A673 (cell line): ENCODE measurements at regions of chr11 and their contacts with region 1.

Region 1: DNA sequence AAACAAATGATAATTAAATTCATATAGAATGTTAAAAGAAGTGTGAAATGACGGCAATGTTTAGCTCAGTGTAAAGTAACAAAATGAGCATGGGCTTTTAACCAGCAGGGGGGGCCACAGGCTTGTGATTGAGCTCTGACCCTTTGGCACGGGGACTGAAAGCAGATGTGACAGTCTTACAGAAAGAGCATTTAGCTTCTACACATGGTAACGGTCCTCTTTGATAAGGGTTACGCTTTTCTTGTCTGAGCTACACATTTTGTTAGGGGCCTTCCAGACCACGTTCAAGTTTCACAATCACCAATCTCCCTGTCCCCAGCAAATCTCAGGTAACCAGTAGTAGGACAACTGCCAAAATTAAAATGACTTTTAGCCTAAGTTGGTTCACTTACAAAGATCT is 262.5 kb downstream of the DCDC1 start:
- DNase-seq: peak; percentile 95
- H3K4me3 ChIP-seq: no peak overlapping the region
- H3K27ac ChIP-seq: no peak overlapping the region
- H3K4me1 ChIP-seq: peaks cover 29% of the 10 kb centered on the region
- H3K27me3 ChIP-seq: no peaks in the 10 kb centered on the region
- CTCF ChIP-seq: peak; percentile 100

Region 2: DNA sequence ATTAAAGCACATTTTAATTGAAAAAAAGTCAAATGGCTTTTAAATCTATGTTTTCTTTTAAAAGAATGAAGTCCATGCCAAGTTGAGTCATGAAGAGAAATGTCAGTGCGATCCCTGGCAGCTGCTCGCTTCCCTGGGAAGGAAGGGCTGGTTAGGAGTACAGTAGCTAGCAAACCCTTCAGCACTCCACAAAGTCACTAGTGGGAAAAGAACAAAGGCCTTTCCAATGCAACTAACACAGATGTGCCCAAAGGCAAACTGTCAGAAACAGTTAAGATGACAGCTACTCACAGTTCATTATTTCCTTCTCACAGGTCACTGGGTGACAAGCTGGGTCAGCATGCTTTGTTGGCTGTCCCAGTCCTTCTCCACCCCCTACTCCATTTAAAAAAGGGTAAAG is 46.2 kb before region 1 on chr11:
- CTCF ChIA-PET with region 1: no interaction called
- POLR2A ChIA-PET with region 1: no interaction called
- intact Hi-C with region 1: no loop called
- DNase-seq: no peak
- H3K4me3 ChIP-seq: no peak overlapping the region
- H3K27ac ChIP-seq: no peak overlapping the region
- H3K4me1 ChIP-seq: no peaks in the 10 kb centered on the region
- H3K27me3 ChIP-seq: peaks cover 23% of the 10 kb centered on the region
- CTCF ChIP-seq: no peak

Region 3: GRCh38 chr11:31233424-31233823 is 126.4 kb after region 1 on chr11:
- CTCF ChIA-PET with region 1: interaction called, 50 read pairs
- POLR2A ChIA-PET with region 1: interaction called, 3 read pairs
- intact Hi-C with region 1: loop called (anchors 1 kb)
- DNase-seq: peak; percentile 68
- H3K4me3 ChIP-seq: no peak overlapping the region
- H3K27ac ChIP-seq: no peak overlapping the region
- H3K4me1 ChIP-seq: peaks cover 16% of the 10 kb centered on the region
- H3K27me3 ChIP-seq: no peaks in the 10 kb centered on the region
- CTCF ChIP-seq: peak; percentile 81

Region 4: GRCh38 chr11:31340903-31341572 is 234.0 kb after region 1 on chr11:
- CTCF ChIA-PET with region 1: interaction called, 9 read pairs
- POLR2A ChIA-PET with region 1: no interaction called
- intact Hi-C with region 1: loop called (anchors 10 kb)
- DNase-seq: peak; percentile 80
- H3K4me3 ChIP-seq: no peak overlapping the region
- H3K27ac ChIP-seq: no peak overlapping the region
- H3K4me1 ChIP-seq: no peaks in the 10 kb centered on the region
- H3K27me3 ChIP-seq: peaks cover 71% of the 10 kb centered on the region
- CTCF ChIP-seq: peak; percentile 99

Region 5: GRCh38 chr11:31408201-31408600 is 301.1 kb after region 1 on chr11:
- CTCF ChIA-PET with region 1: no interaction called
- POLR2A ChIA-PET with region 1: no interaction called
- intact Hi-C with region 1: no loop called
- DNase-seq: no peak
- H3K4me3 ChIP-seq: no peak overlapping the region
- H3K27ac ChIP-seq: no peak overlapping the region
- H3K4me1 ChIP-seq: peaks cover 5% of the 10 kb centered on the region
- H3K27me3 ChIP-seq: no peaks in the 10 kb centered on the region
- CTCF ChIP-seq: no peak

Region 6: DNA sequence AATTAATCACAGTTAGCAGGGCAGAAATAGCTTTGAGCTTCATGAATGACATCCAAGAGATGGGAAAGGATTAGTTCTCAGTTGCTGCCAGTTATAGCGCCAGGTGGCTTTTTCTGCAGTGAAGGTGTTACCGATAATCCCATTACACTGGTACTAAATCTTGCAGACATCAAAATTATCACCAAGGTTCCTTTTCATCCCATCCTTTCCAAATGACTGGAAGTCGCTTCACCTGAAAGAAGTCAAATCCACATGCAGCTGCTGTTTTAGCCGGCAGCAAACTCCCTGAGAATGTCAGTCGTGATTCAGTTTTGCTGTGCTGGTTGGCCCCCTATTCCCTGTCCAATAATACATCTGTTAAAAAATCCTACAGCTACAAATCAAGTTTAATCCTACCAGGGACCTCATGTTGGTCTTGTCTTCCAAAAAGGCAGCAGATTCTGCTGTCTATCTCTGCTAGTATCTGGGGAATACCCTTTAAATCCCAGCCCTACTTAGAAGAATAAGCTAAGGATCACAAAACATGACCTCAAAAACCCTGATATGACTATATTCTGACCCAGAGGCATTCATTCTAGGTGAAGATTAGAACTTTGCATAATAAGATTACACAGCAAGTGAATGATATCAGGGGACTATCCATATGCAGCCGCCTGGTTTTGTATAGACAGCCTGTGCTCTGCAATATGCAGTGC is 370.6 kb after region 1 on chr11:
- CTCF ChIA-PET with region 1: no interaction called
- POLR2A ChIA-PET with region 1: no interaction called
- intact Hi-C with region 1: loop called (anchors 10 kb)
- DNase-seq: peak; percentile 42
- H3K4me3 ChIP-seq: no peak overlapping the region
- H3K27ac ChIP-seq: no peak overlapping the region
- H3K4me1 ChIP-seq: peaks cover 21% of the 10 kb centered on the region
- H3K27me3 ChIP-seq: no peaks in the 10 kb centered on the region
- CTCF ChIP-seq: no peak

Region 7: DNA sequence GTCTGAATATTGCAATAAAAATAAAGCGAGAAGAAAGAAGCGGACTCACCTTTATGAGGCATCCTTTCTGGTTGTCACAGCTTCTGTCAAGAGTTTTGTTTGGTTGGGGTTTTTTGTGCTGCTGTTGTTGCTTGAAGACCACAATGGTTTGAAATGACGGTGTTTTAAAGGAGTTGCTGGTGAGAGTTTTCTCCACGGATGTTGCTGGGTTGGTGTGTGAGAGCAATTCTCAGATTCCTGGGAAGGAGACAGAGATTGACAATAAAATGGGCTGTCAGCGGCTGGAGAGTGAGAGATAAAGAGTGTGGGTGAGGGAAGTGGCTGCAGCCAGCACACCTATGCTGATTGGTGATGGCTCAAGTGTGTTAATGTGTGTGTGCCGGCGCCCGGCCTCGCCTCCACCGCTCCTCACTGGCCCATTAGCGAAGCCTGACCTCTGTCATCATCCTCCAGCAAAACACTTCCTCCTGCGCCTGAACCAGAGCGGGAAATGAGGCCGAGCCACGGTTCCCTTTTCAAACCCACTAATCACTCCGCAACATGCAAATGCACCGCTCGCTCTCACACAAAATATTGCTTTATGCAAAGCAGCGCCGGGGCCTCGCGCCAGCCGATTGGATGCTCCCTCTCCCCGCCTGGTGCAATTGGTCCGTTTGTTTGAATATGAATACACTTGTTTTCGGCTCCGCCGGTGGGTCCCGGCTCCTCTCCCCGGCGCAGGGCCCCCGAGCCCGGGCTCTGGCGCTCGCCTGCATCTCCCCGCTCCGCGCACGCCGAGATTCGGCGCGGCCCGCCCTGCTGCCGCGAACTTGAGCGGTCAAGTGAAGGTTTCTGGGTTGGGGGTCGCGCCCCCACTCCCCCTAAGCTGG is 704.0 kb after region 1 on chr11 and contains the start of gene PAX6:
- CTCF ChIA-PET with region 1: no interaction called
- POLR2A ChIA-PET with region 1: no interaction called
- intact Hi-C with region 1: loop called (anchors 5 kb)
- DNase-seq: peak; percentile 100
- H3K4me3 ChIP-seq: peak within 1 kb of the TSS; percentile 60
- H3K27ac ChIP-seq: peak within 1 kb of the TSS; percentile 79
- H3K4me1 ChIP-seq: peaks cover 67% of the 10 kb centered on the region
- H3K27me3 ChIP-seq: peaks cover 94% of the 10 kb centered on the region
- CTCF ChIP-seq: no peak
- total RNA-seq, gene PAX6: 22.4 and 33.9 TPM in 2 replicates

Region 8: DNA sequence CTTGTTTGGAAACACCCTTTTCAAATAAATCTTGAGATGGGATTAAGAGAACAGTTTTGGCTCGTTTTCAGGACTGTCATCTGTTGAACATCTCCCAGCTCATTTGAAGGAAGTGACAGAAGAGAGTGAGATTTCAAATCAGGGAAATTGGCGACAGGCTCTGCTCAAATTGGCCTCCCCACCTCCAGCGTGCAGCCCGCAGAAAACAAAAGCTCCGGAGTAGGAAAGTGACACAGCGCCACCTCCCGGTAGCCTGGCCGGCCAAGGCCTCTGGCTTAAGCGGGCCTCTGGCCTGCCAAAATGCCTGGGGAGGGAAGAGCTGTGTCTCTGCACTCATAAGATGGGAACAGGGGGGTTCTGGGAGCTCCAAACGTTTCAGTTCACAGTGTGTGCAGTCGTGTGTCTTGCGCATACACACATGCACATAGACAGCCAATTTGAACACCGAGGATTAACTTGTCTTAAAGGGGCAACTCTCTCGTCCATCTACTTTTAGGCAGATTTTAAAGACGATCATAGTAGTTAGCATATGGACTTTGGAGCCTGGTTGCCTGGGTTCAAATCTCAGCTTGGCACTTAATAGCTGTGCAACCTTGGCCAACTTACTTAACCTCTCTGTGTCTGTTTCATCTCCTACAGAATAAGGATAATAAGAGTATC is 851.1 kb after region 1 on chr11:
- CTCF ChIA-PET with region 1: interaction called, 17 read pairs
- POLR2A ChIA-PET with region 1: interaction called, 3 read pairs
- intact Hi-C with region 1: loop called (anchors 1 kb)
- DNase-seq: peak; percentile 93
- H3K4me3 ChIP-seq: no peak overlapping the region
- H3K27ac ChIP-seq: no peak overlapping the region
- H3K4me1 ChIP-seq: no peaks in the 10 kb centered on the region
- H3K27me3 ChIP-seq: no peaks in the 10 kb centered on the region
- CTCF ChIP-seq: peak; percentile 100

Region 9: GRCh38 chr11:32297611-32298011 is 1190.5 kb after region 1 on chr11:
- CTCF ChIA-PET with region 1: interaction called, 9 read pairs
- POLR2A ChIA-PET with region 1: no interaction called
- intact Hi-C with region 1: loop called (anchors 5 kb)
- DNase-seq: peak; percentile 90
- H3K4me3 ChIP-seq: no peak overlapping the region
- H3K27ac ChIP-seq: no peak overlapping the region
- H3K4me1 ChIP-seq: no peaks in the 10 kb centered on the region
- H3K27me3 ChIP-seq: no peaks in the 10 kb centered on the region
- CTCF ChIP-seq: peak; percentile 88